ENCODE measurements at regions of chr20 and their contacts with region 1.

Region 1: DNA sequence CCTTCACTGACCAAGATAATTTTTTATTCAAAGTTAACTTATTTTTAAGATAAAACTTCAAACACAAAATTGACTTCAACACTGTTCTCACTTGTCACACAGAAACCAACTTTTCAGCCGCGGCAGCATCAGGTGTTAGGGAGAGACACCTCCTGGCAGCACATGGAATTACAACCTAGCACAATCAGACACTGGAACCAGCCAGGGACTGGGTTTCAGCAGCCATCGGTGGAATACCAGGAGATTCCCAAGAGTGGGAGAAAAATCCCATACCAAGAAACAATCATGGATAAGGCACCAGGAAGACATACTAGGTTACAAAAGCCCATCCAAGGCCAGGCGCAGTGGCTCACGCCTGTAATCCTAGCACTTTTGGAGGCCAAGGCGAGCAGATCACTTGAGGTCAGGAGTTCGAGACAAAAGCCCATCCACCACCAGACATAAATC is 70.0 kb downstream of the SNX5 start:
- DNase-seq: peak; percentile 80
- ATAC-seq: peak; percentile 10; the same call in 2 of the 3 replicates
- H3K4me3 ChIP-seq: no peak overlapping the region
- H3K27ac ChIP-seq: no peak overlapping the region
- H3K4me1 ChIP-seq: peaks cover 52% of the 10 kb centered on the region
- H3K27me3 ChIP-seq: peaks cover 0 to 16% of the 10 kb centered on the region in 2 experiments; a peak in 4 of 5 replicates
- CTCF ChIP-seq: peak; percentile 98
- EP300 ChIP-seq: 0 out of 4 replicates have a peak, but pooled peaks of 1 of the 2 experiments have one; percentile 24
- POLR2A ChIP-seq: no peak
- RAD21 ChIP-seq: peak; percentile 99

Region 2: GRCh38 chr20:17536944-17537444 is 361.6 kb before region 1 on chr20:
- CTCF ChIA-PET with region 1: interaction called, 10 read pairs
- POLR2A ChIA-PET with region 1: interaction called, 3 read pairs
- in situ Hi-C with region 1: no loop called
- intact Hi-C with region 1: loop called (anchors 1 kb)
- DNase-seq: peak; percentile 90
- ATAC-seq: peak; percentile 100
- H3K4me3 ChIP-seq: peak overlapping the region in 1 of 3 experiments; percentile 18; a peak in 1 of 6 replicates
- H3K27ac ChIP-seq: no peak overlapping the region
- H3K4me1 ChIP-seq: peaks cover 23% of the 10 kb centered on the region
- H3K27me3 ChIP-seq: peaks cover 0 to 2% of the 10 kb centered on the region in 2 experiments; a peak in 1 of 5 replicates
- CTCF ChIP-seq: peak; percentile 99
- EP300 ChIP-seq: peak in 1 of 2 experiments; percentile 29; a peak in 1 of 4 replicates
- POLR2A ChIP-seq: no peak
- RAD21 ChIP-seq: peak; percentile 98

Region 3: GRCh38 chr20:17721802-17722486 is 176.6 kb before region 1 on chr20:
- CTCF ChIA-PET with region 1: interaction called, 13 read pairs
- POLR2A ChIA-PET with region 1: interaction called, 4 read pairs
- in situ Hi-C with region 1: no loop called
- intact Hi-C with region 1: loop called (anchors 1 kb)
- DNase-seq: peak; percentile 99
- ATAC-seq: peak; percentile 91
- H3K4me3 ChIP-seq: peak overlapping the region in 1 of 3 experiments; percentile 8; a peak in 2 of 6 replicates
- H3K27ac ChIP-seq: peak overlapping the region; percentile 55
- H3K4me1 ChIP-seq: peaks cover 44% of the 10 kb centered on the region
- H3K27me3 ChIP-seq: peaks cover 4 to 65% of the 10 kb centered on the region in 2 experiments; a peak in 4 of 5 replicates
- CTCF ChIP-seq: peak; percentile 35; the same call in 1 of the 2 replicates
- EP300 ChIP-seq: peak; percentile 99; a peak in 3 of 4 replicates
- POLR2A ChIP-seq: no peak
- RAD21 ChIP-seq: peak; percentile 59; the same call in 1 of the 2 replicates

Region 4: GRCh38 chr20:17825960-17826843 is 72.4 kb before region 1 on chr20:
- CTCF ChIA-PET with region 1: no interaction called
- POLR2A ChIA-PET with region 1: interaction called, 7 read pairs
- in situ Hi-C with region 1: no loop called
- intact Hi-C with region 1: loop called (anchors 1 kb)
- DNase-seq: peak; percentile 44
- ATAC-seq: peak; percentile 10; the same call in 1 of the 3 replicates
- H3K4me3 ChIP-seq: no peak overlapping the region
- H3K27ac ChIP-seq: no peak overlapping the region
- H3K4me1 ChIP-seq: peaks cover 88% of the 10 kb centered on the region
- H3K27me3 ChIP-seq: no peaks in the 10 kb centered on the region; a peak in 1 of 5 replicates
- CTCF ChIP-seq: no peak
- EP300 ChIP-seq: no peak
- POLR2A ChIP-seq: no peak
- RAD21 ChIP-seq: no peak

Region 5: GRCh38 chr20:17873410-17874270 is 24.9 kb before region 1 on chr20:
- CTCF ChIA-PET with region 1: interaction called, 3 read pairs
- POLR2A ChIA-PET with region 1: interaction called, 724 read pairs
- in situ Hi-C with region 1: no loop called
- intact Hi-C with region 1: loop called (anchors 1 kb)
- DNase-seq: peak; percentile 91
- ATAC-seq: peak; percentile 71
- H3K4me3 ChIP-seq: peak overlapping the region in 2 of 3 experiments; percentile 1 to 55; a peak in 3 of 6 replicates
- H3K27ac ChIP-seq: peak overlapping the region; percentile 78
- H3K4me1 ChIP-seq: peaks cover 86% of the 10 kb centered on the region
- H3K27me3 ChIP-seq: no peaks in the 10 kb centered on the region
- CTCF ChIP-seq: peak; percentile 12; the same call in 1 of the 2 replicates
- EP300 ChIP-seq: no peak; a peak in 1 of 4 replicates
- POLR2A ChIP-seq: peak; percentile 73 to 77
- RAD21 ChIP-seq: peak; percentile 11

Region 6: DNA sequence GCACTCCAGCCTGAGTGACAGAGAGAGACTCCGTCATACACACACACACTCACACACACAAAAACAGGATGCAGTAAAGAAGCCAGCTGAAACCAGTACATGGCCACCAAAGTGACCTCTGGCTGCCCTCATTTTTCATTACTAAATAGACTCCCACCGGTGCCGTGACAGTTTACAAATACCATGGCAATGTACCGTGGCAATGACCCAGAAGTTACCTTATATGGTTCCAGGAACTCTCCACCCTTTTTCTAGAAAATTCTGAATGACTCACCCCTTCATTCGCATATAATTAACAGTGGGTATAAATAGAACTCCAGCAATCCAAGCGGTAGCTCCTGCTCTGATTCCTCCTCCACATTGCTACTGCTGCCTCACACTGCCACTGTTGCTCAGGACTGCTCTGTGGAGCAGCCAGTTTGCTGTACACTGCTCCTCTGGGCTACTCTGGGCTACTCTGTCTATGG is 12.3 kb after region 1 on chr20:
- CTCF ChIA-PET with region 1: no interaction called
- POLR2A ChIA-PET with region 1: no interaction called
- in situ Hi-C with region 1: no loop called
- intact Hi-C with region 1: no loop called
- DNase-seq: no peak
- ATAC-seq: peak; percentile 67
- H3K4me3 ChIP-seq: no peak overlapping the region
- H3K27ac ChIP-seq: no peak overlapping the region
- H3K4me1 ChIP-seq: peaks cover 13% of the 10 kb centered on the region; the same call in 1 of the 2 replicates
- H3K27me3 ChIP-seq: peaks cover 4 to 30% of the 10 kb centered on the region in 2 experiments; a peak in 4 of 5 replicates
- CTCF ChIP-seq: no peak
- EP300 ChIP-seq: no peak
- POLR2A ChIP-seq: no peak
- RAD21 ChIP-seq: no peak

Region 7: DNA sequence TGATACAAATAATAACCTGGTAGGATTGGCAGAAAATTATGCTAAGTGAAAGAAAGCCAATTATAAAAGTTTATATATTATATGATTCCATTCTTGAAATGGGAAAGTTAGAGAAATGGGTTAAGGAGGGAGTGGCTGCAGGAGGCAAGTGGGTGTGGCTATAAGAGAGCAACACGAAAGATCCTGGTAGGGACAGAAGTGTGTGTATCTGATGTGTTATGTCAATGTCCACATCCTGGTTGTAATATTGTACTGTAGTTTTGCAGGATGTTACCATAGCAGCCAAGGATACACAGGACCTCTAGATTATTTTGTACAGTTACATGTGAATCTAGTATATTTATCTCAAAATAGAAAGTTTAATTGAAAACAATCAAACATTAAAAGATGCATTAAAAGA is 23.2 kb after region 1 on chr20:
- CTCF ChIA-PET with region 1: no interaction called
- POLR2A ChIA-PET with region 1: no interaction called
- in situ Hi-C with region 1: no loop called
- intact Hi-C with region 1: no loop called
- DNase-seq: no peak
- ATAC-seq: no peak
- H3K4me3 ChIP-seq: no peak overlapping the region
- H3K27ac ChIP-seq: no peak overlapping the region
- H3K4me1 ChIP-seq: peaks cover 40% of the 10 kb centered on the region
- H3K27me3 ChIP-seq: peaks cover 3 to 10% of the 10 kb centered on the region in 2 experiments; a peak in 3 of 5 replicates
- CTCF ChIP-seq: no peak
- EP300 ChIP-seq: no peak
- POLR2A ChIP-seq: no peak
- RAD21 ChIP-seq: no peak

Region 8: GRCh38 chr20:17938871-17939619 is 40.5 kb after region 1 on chr20:
- CTCF ChIA-PET with region 1: no interaction called
- POLR2A ChIA-PET with region 1: no interaction called
- in situ Hi-C with region 1: no loop called
- intact Hi-C with region 1: loop called (anchors 2 kb)
- DNase-seq: peak; percentile 76
- ATAC-seq: peak; percentile 76
- H3K4me3 ChIP-seq: peak overlapping the region; percentile 5 to 62 (median 32); a peak in 3 of 6 replicates
- H3K27ac ChIP-seq: peak overlapping the region; percentile 43
- H3K4me1 ChIP-seq: peaks cover 47% of the 10 kb centered on the region
- H3K27me3 ChIP-seq: peaks cover 6 to 22% of the 10 kb centered on the region in 2 experiments; a peak in 4 of 5 replicates
- CTCF ChIP-seq: peak; percentile 99
- EP300 ChIP-seq: no peak
- POLR2A ChIP-seq: peak in 1 of 2 experiments; percentile 44; a peak in 2 of 4 replicates
- RAD21 ChIP-seq: peak; percentile 99